H1 (cell line): ENCODE measurements at regions of chr16 and their contacts with region 1.

Region 1: DNA sequence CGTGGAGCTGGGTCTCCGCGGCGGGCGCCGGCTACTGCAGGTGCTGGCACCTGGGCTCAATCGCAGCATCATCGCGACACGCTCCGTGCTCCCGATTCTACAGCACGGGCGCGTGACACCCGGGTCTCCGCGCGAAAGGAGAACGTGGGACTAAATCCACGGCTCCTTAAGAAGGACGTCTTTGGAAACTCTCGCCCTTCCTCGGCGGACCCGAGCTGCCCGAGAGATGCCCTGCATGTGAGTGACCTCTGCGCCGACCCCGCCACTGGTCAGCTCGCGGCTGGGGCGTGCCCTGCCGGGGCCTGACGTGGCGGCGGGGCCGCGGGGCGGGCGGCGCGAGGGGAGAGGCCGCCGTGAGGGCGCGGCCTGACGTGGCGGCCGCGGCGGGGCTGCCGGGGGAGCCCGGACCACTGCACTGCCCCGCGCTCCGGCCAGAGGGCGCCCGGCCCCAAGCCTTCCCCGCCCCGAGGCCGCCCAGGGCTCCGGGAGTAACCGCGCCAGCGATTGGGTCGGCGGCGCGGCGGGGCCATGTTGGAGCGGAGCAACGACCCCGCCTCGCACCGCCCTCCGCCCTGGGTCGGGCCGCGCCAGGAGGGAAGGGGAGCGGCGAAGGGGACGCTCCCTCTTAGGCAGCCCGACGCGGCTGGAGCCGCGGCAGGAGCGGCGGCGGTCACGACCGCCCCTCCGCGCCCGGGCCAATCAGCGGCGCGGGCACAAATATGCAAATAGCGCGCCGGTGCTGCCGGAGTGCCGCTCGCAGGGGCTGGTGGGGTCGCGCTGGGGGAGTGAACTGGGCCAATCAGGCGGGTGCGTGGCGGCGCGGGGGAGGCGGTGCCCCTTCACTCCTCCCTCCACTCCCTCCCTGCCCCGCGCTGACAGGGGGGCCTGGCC is 75.6 kb downstream of the CHD9 start:
- DNase-seq: peak; percentile 77 to 93
- H3K4me3 ChIP-seq: peak overlapping the region; percentile 68 to 89 (median 76)
- H3K27ac ChIP-seq: peak overlapping the region; percentile 93
- H3K4me1 ChIP-seq: peaks cover 2 to 6% (median 4%) of the 10 kb centered on the region in 4 experiments; a peak in 2 of 7 replicates
- H3K27me3 ChIP-seq: no peaks in the 10 kb centered on the region
- CTCF ChIP-seq: peak; percentile 57 to 79 (median 73)
- EP300 ChIP-seq: 0 out of 3 replicates have a peak, but pooled peaks of 1 of the 2 experiments have one; percentile 8
- POLR2A ChIP-seq: peak; percentile 20 to 30; a peak in 2 of 3 replicates
- RAD21 ChIP-seq: peak; percentile 62 to 78

Region 2: DNA sequence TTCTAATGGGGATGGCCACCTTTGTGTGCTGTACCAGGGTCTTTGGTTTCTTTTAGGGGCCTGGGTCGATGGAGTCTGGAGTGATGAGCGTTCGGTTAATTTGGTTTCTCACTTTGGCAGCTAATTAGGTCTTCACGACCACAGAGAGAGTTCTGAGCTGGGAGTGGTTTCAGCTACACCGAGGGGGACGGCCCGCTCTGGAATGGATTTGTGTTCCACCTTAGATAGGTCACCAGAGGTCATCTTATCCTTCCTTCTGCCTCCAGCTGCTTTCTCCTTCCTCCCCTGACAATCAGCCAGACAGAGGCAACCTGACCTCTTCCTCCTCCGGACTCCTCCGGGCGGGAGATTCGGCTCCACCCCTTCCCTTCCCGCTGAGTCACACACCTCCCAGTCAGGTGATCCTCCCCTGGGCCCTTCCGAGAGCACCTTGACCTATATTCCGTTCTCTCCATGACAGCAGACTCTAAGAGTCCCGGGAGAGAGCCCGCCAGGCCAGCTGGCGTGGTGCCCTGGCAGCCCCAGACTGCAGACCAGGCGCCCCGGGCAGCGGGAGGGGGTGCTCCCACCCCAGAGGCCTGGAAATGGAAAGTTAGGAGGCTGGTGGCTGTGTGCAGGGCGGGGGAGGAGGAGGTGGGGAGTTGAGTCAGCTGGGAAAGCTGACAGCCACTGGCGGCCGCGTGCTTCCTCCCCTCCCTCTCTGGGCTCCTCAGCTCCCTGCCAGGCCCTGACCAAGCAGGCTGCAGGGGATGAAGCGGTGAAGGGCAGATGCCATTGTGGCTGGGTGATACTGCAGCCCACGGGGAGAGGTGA is 30.9 kb before region 1 on chr16:
- CTCF ChIA-PET with region 1: interaction called, 10 read pairs
- POLR2A ChIA-PET with region 1: interaction called, 8 read pairs
- DNase-seq: peak; percentile 88 to 93
- H3K4me3 ChIP-seq: peak overlapping the region; percentile 31 to 64 (median 40)
- H3K27ac ChIP-seq: peak overlapping the region; percentile 24; the same call in 1 of the 2 replicates
- H3K4me1 ChIP-seq: peaks cover 5 to 12% (median 9%) of the 10 kb centered on the region in 4 experiments
- H3K27me3 ChIP-seq: no peaks in the 10 kb centered on the region
- CTCF ChIP-seq: no peak
- EP300 ChIP-seq: 0 out of 3 replicates have a peak, but pooled peaks of 1 of the 2 experiments have one; percentile 41
- POLR2A ChIP-seq: no peak; a peak in 1 of 3 replicates
- RAD21 ChIP-seq: no peak; a peak in 1 of 4 replicates